Upper lobe of right lung (tissue), 1 donor: ENCODE measurements at regions of chr7 and their contacts with region 1.

Region 1: DNA sequence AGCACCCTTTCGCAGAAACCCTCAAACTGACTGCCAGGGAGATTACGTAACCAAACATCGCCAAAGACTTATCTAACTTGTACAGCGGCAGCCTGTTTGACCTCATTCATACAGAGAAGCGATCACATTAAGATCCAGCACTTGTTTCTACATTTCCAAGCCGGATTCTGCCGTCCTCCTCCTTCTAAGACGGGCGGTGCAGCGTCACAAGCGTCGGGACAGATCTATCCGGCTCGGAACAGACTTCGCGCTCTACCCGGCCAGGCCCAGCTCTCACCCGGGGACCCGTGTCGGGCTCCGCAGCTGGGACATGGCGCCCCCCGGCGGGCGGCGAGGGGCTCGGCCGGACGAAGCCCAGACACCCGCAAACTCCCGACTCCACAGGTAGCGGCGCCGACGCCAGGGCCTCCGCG is 373 bp downstream of the H2AZ2 start:
- DNase-seq: peak; percentile 95
- ATAC-seq: peak; percentile 88
- H3K4me3 ChIP-seq: peak overlapping the region; percentile 69
- H3K27ac ChIP-seq: peak overlapping the region; percentile 95
- H3K4me1 ChIP-seq: peaks cover 28% of the 10 kb centered on the region
- H3K27me3 ChIP-seq: no peaks in the 10 kb centered on the region
- CTCF ChIP-seq: peak; percentile 87

Region 2: DNA sequence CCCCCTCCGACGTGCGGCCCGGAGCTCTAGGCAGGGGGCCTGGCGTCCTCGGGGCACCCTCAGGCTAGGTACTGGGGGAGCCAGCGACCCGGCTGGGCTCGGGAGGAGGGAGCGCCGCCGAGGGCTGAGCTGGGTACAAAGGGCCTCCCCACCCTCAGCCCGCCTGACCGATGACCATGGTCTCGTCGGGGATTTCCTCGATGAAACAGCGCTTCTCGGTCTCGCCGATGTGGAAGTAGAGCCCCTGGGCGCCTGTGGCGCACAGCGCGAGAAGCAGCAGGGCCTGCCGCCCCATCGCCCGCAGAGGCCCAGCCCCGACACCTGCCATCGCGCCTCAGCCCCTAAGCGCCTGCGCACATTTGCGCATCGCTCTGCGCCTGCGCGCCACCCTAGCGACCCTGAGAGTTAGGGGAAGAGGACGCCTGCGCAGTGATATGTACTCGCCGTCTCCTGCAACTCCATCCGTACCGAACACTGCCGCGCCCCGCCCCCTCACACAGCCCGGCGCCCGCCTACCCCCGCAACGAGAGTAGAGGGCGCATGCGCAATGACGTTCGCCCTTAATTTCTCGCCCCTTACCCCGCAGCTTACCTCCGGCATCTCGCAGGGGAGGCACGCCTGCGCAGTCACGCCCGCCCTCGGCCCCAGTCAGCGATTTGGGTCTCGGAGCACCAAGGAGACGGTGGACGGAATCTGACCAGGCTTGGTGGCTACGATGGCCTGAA is 265.5 kb before region 1 on chr7 and contains the start of gene TMED4:
- intact Hi-C with region 1: loop called (anchors 10 kb)
- DNase-seq: peak; percentile 100
- ATAC-seq: peak; percentile 99
- H3K4me3 ChIP-seq: peak within 1 kb of the TSS; percentile 100
- H3K27ac ChIP-seq: peak within 1 kb of the TSS; percentile 98
- H3K4me1 ChIP-seq: peaks cover 14% of the 10 kb centered on the region
- H3K27me3 ChIP-seq: no peaks in the 10 kb centered on the region
- CTCF ChIP-seq: no peak
- total RNA-seq, gene TMED4: 78.3 TPM

Region 3: DNA sequence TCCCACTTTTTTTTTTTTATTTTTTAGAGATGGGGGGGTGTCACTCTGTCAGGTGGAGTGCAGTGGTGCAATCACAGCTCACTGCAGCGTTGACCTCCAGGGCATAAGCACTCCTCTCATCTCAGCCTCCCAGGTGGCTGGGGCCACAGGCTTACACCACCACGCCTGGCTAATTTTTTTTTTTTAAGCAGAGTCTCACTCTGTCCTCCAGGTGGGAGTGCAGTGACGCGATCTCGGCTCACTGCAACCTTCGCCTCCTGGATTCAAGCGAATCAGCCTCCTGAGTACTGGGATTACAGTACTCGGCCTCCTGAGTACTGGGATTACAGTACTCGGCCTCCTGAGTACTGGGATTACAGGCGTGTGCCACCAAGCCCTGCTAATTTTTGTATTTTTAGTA is 74.7 kb before region 1 on chr7:
- intact Hi-C with region 1: no loop called
- DNase-seq: no peak
- ATAC-seq: no peak
- H3K4me3 ChIP-seq: no peak overlapping the region
- H3K27ac ChIP-seq: no peak overlapping the region
- H3K4me1 ChIP-seq: peaks cover 30% of the 10 kb centered on the region
- H3K27me3 ChIP-seq: no peaks in the 10 kb centered on the region
- CTCF ChIP-seq: no peak

Region 4: GRCh38 chr7:45033261-45033930 is 185.9 kb after region 1 on chr7:
- intact Hi-C with region 1: no loop called
- DNase-seq: no peak
- ATAC-seq: no peak
- H3K4me3 ChIP-seq: no peak overlapping the region
- H3K27ac ChIP-seq: no peak overlapping the region
- H3K4me1 ChIP-seq: peaks cover 8% of the 10 kb centered on the region
- H3K27me3 ChIP-seq: no peaks in the 10 kb centered on the region
- CTCF ChIP-seq: no peak

Region 5: GRCh38 chr7:45136106-45137060 is 288.9 kb after region 1 on chr7:
- intact Hi-C with region 1: no loop called
- DNase-seq: no peak
- ATAC-seq: peak; percentile 87
- H3K4me3 ChIP-seq: no peak overlapping the region
- H3K27ac ChIP-seq: no peak overlapping the region
- H3K4me1 ChIP-seq: no peaks in the 10 kb centered on the region
- H3K27me3 ChIP-seq: no peaks in the 10 kb centered on the region
- CTCF ChIP-seq: peak; percentile 92